Left cardiac atrium (tissue), 4 donors: ENCODE measurements at regions of chr12 and their contacts with region 1.

Region 1: DNA sequence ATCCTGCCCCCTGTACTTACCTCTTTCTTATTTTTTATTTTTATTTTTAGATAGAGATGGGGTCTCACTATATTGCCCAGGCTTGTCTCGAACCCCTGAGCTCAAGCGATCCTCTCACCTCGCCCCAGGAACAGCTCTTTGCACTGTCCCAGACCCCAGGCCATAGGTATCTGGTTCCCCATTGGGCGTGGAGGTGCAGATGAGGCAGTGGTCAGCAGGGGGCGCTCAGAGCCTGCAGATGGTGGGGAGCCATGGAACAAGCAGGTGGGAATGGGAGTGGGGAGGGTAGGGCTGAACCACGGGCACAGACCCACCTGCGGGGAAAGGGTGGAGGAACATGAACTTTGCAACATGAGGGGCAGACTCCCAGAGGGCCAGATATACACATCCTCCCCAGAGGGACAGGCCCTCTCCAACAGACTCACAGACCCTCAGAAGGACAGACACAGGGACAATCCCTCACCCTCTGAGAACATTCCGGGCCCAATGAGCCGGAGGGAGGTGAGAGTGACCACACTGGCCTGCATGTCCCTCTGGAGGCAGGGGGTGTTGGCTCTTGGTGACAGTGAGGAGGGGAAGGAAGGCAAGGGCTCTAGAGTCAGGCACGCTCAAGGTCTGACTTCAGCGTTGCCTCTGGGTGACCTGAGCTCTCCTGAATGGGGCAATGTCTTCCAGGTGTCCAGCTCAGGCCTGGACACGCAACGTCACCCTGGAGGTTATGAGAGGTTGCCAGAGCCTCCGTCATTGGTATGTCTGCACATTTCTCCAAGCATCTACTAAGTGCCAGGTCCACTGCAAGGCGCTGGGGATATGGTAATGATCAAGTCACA is 34.9 kb downstream of the KRT80 start:
- DNase-seq: peak; percentile 75
- ATAC-seq: peak; percentile 60 to 72

Region 2: DNA sequence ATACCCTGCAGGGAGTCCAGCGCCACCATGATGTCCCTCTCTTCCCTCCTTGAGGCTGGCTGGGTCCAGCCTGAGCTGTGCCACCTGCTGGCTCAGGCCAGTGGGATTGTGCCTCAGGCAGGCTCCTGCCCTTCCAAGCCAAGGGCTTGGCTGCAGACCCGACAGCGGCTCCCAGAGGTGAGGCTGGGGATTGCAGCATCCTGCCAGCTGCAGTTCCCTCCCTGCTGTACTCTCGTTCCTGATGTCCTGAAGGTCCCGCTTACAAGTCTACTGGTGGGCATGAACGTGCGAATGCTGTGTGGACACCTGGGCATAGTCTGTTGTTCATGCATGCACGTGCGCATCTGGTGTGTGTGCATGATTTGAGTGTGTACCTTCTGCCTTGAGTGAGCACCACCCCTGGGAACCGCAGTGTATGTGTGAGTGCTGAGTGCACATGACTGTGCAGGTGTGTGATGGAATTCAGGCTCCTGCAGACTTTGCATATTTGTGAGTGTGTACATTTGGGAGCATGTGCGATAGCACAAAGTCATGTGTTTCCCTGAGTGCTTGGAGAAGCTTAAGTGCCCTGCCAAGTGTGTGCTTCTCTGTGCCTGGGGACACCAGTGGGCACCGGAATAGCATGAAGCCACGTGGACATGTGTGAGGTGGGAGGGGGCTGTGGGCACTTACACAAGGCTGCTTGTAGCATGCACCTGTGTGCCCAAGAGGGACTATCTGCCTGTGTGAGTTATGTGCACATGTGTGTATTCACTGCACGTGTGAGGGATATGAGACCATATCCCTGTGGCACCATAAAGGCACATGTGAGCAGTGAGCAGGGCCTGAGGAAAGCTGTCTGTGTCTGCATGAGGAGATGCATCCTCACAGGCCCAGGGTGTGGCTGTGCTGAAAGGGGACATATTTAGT is 56.8 kb after region 1 on chr12:
- intact Hi-C with region 1: loop called in 1 of 2 experiments (anchors 2 kb)
- DNase-seq: peak; percentile 67
- ATAC-seq: peak; percentile 75 to 84

Region 3: GRCh38 chr12:52268212-52268611 is 111.3 kb after region 1 on chr12:
- intact Hi-C with region 1: no loop called
- DNase-seq: no peak
- ATAC-seq: no peak

Region 4: DNA sequence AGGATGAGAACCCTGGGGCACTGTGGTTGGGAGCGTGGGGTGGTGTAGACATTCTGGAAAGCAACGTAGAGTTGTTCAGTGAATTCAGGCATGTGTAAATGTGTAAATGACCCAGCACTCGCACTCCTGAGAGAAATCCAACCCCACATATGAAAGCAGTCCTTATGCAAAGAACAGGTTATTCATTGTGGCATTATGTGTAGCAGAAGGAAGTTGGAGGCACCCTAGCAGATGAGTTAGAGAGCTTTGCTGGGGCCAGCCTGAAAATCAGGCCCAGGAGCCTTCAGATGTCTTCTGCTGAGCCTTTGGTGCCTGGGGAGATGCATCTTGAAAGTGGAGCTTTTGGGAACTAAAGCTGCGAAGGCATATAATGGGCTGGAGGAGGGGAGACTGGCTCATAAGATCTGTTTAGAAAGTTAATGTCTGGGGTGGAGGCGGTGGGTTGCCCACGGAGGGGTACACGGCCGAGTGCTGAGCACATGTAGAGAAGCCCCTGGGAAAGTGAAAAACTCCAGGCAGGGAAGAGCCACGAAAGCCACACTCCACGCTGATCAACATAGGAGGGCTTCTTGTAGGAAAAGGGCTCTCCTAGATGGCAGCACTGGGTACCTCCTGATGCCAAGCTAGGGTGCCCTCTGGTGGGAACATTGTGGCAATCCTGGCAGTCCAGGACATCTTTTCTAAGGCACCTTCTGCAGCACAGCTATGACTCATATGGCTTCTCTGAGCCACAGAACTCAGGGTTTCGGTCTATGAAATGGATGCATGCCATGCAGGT is 170.3 kb after region 1 on chr12:
- intact Hi-C with region 1: loop called (anchors 2 to 10 kb)
- DNase-seq: peak; percentile 78
- ATAC-seq: peak; percentile 82 to 94

Region 5: DNA sequence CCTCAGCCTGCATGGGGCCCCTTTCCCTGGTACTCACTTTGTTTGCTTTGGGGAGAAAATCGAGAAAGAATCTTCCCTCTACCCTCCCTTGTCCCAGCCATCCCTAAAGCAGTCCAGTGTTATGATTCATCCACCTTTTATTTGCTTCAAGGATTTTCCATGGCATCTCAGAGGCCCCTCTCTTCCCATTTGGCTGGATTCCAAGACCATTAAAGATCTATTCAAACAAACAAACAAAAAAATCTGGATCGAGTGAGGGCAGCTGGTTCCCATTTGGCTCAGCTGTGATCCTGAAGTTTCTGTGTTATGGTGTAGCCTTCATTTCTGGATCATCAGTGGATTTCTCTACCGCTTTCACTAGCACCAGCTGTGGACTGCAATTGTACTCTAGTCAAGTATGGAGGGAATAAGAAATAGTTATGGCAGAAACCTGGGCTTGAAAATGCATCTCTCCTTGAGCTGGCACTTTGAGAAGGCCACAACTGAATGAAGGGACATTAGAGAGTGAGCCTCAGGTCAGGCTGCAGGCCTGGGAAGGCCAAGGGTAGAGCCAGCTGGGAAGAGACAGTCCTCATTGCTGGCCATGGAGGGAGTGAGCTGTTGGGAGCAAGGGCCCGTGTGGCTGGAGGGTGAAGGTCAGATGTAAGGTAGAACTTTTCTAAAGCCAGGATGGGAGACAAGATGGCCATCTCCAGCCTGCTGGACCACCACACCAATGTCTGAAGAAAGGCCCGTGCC is 382.3 kb after region 1 on chr12:
- intact Hi-C with region 1: no loop called
- DNase-seq: no peak
- ATAC-seq: no peak

Region 6: DNA sequence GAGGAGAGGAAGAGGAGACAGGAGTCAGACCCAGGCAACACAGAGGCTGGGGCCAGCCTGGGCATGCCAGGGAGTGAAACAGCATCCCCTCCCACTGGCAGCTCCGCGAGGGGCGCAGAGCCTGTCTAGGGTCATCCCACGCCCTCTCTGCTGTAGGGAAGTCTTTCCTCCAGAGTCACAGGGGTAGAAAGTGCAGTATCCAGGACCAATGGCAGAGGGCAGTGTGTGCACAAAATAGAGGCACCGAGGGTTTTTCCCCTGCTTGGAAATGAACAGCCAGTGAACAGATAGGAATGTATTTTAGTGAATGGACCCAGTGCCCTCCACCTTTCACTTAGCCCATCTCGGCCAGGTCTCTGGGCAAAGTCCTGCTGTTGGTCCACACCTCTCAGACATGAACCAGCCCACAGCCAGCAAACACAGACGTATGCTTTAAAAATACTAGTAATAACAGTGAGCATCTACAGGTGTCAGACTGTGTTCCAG is 426.1 kb after region 1 on chr12:
- intact Hi-C with region 1: loop called in 1 of 2 experiments (anchors 10 kb)
- DNase-seq: peak; percentile 41
- ATAC-seq: peak; percentile 83 to 88

Region 7: GRCh38 chr12:52603314-52603713 is 446.4 kb after region 1 on chr12:
- intact Hi-C with region 1: no loop called
- DNase-seq: no peak
- ATAC-seq: no peak

Region 8: DNA sequence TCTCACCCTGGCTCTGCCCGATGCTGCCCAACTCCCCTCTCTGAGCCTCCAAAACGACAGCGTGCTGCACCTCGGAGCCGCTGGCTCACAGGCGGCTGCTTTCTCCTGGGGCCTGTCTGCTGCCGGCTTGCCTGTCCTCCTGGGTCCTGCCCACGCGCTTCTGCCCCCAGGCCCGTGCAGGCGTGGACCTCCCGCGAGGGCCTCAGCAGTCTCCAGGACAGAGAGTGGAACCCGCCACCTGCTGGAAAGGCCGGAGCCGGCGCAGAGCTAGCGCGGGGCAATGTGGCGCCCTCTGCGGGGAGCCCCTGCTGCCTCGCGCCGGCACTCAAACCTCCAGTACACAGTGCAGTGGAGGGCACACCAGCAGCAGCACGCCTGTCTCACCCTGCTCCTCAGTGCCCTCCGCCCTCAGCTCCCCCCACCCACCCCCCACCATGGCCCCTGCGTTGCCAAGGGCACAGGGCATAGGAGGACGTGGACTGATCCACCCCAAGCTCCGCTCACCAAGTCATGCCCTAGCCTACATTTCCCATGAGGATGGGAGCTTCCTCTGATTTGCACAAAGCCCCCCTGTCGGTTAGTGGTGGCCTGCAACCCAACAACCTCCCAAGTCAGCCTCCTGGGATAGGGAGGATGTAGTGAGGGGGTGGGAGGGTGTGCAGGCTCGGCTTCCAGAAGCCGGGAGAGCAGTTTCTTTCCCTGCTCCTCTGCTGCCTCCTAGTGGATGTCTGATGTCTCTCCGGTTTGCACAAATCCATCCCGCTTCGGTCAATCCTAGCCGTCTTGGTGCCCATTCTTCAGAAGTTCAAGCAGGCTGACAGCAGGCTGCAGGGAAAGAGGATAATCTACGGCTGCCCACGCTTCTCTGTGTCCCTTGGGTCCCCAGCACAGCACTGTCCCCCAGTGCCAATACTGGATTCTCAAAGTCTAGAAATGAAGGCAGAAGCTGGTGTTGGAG is 722.7 kb after region 1 on chr12:
- intact Hi-C with region 1: loop called (anchors 2 to 5 kb)
- DNase-seq: peak; percentile 80
- ATAC-seq: peak; percentile 88

Region 9: DNA sequence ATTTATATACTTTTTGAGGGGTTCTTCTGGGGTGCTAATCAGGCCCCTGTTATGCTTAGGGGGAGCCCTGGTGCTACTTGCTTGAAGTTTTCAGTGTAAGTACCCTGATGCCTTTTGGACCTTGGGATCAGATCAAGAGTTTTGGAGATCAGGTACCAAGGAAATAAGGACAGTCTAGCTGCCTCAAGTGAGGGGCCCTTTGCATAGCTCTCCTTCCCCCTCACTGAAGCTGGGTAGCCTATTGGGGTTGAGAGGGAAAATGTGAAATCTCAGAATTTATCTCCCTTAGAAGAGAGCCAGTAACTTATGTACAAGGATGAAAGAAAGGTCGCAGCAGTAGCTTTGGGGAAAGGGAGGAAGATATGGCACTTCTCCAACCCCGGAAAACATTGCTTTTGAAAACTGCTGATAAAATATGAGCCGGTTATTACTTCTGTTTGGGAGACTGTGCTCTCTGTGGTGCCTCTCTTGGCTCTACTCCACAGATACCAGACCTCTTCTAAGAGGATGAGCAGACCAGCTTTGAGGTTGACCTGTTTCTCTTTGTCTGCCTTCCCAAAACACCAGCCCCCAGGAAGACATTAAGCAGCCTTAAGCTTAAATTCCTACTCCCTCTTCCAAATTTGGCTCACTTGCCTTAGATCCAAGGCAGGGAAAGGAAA is 1257.9 kb after region 1 on chr12:
- intact Hi-C with region 1: no loop called
- DNase-seq: no peak
- ATAC-seq: peak; percentile 27 to 62